ENCODE measurements at regions of chr15 and their contacts with region 1.

Region 1: DNA sequence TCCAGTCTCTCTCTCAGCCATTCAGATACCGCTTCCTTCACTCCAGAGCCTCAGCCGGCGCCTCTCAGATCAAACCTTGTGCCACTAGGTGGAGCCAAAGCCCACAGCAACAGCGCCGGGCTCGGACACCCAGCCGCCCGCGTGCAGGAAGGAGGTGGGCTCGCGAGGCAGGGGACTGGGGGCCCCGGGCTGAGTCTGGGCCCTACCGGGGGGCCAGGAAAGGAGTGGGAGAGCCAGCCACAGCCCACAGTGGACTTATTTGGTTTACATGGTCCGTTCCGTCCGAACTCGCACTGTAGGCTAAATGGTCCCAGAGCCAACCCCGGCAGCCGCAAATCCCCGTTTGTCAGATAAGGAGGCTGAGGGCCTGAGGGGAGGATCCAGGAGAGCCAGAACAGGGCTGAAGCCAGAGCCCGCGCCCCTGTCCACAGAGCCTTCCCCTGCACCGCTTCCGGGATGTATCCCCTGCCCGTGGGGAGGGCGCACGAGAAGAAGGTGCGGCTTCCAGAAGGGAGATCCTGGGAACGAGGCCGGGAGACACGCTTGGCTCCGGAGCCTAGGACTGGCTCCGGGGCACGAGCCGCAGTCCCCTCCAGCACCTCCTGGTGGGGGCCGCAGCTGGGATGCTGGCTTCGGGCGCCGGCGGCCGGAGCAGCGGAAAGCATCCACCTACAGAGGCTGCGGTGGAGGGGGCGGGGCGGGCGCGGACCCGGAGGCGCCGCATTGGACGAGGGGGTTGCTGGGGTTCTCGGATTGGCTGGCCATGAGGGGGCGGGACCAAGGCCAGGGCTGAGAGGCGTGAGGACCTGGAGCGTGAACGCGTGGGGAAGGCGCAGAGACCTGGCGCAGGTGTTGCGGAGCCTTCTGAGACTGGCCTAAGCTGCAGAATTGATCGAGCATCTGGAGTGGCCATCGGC is 6.5 kb upstream of the CYP11A1 start:
- DNase-seq: peak; percentile 97
- ATAC-seq: peak; percentile 84
- H3K4me3 Mint-ChIP-seq: peak overlapping the region; percentile 76
- H3K27ac Mint-ChIP-seq: no peak overlapping the region
- H3K4me1 Mint-ChIP-seq: peaks cover 31% of the 10 kb centered on the region
- H3K27me3 Mint-ChIP-seq: peaks cover 7% of the 10 kb centered on the region

Region 2: DNA sequence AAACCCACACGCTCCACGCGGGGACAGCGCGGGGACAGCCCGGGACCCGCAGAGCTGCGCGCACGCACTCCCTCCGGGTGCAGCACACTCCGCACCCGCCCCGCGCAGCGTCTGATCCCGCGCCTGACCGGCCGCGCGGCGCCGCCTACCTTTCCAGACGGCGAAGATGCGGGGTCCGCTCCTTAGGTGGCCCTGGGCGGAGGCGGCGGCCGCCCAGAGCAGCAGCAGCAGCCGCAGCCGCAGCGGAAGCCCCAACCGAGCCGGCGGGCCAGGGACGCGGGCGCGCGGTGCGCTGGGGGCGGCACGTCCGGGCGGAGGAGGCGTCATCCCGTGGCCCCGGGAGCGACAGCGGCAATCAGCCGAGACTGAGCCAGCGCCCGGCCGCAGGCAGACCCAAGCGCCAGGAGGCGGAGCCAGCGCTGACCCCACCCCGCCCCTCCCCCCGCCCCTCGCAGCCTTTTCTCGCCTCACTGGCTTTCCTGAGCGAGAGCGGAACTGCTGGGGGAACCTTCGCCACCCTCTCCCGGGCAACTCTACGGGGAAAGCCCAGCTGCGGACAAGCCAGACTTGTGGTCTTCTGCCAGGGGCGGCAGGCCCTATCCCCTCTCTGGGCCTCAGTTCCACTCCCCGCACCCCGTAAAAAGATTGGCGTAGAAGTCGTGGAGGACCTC is 59.7 kb after region 1 on chr15 and contains the start of gene SEMA7A:
- CTCF ChIA-PET with region 1: interaction called, 176 read pairs
- POLR2A ChIA-PET with region 1: interaction called, 4 read pairs
- intact Hi-C with region 1: loop called (anchors 1 to 2 kb)
- DNase-seq: peak; percentile 90
- ATAC-seq: peak; percentile 89
- H3K4me3 Mint-ChIP-seq: peak within 1 kb of the TSS; percentile 83
- H3K27ac Mint-ChIP-seq: peak within 1 kb of the TSS; percentile 56
- H3K4me1 Mint-ChIP-seq: peaks cover 59% of the 10 kb centered on the region
- H3K27me3 Mint-ChIP-seq: no peaks in the 10 kb centered on the region
- total RNA-seq, gene SEMA7A: 57.3 to 57.7 TPM

Region 3: DNA sequence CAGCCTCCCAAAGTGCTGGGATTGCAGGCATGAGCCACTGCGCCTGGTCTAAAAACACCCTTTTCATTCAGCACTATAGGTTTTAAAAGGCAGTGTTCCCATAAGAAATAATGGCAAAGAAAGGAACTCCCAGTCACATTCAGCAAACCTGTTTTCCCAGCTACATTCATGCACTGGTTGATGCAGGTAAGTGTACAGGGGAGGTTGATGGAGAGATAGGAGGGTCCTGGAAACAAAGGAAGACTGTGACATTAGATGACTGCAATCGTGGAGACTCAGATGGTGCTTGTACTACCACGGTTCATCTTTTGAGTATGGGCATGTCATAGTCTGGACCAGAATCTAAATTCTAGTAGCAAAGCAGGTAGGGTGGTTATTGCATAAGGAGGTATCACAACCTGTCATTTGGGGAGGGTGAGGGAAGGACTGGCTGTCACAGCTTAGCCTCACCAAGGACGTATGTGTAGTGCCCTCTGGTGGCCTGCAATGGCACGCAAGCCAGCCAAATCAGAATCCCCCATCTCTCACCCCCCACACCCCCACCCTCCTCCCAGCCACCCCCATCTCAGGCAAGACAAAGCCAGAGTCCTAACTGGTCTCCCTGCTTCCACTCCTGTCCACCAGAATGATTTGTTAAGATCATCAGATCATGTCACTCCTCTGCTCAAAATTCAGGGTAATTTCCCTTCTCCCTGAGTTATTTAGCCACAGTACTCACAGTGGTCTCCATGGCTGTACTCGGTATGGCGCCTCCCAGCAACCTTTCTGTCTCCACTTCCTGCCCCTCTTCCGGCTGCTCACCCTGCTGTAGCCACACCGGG is 115.7 kb after region 1 on chr15:
- CTCF ChIA-PET with region 1: interaction called, 12 read pairs
- POLR2A ChIA-PET with region 1: no interaction called
- intact Hi-C with region 1: loop called (anchors 1 kb)
- DNase-seq: peak; percentile 85
- ATAC-seq: peak; percentile 92
- H3K4me3 Mint-ChIP-seq: no peak overlapping the region
- H3K27ac Mint-ChIP-seq: no peak overlapping the region
- H3K4me1 Mint-ChIP-seq: peaks cover 12% of the 10 kb centered on the region
- H3K27me3 Mint-ChIP-seq: no peaks in the 10 kb centered on the region

Region 4: DNA sequence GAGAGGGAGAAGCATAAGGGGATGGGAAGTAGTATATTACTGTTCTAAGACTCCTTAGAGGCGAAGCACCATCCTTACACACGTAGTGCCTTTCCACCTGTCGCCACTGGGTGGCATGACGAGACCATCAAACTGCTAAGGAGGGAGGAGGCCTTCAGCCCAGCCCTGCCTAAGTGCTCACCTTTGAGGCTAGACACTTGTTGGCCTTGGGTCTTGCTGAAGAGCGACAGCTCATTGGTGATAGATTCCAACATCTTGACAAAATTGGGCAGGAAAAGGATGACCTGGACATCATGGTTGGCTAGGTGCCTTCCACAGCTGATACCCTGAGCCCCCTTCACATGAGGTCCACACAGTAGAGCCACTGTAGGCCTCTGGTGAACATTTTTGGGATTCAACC is 261.2 kb after region 1 on chr15:
- CTCF ChIA-PET with region 1: interaction called, 7 read pairs
- POLR2A ChIA-PET with region 1: no interaction called
- intact Hi-C with region 1: loop called (anchors 1 kb)
- DNase-seq: peak; percentile 87
- ATAC-seq: peak; percentile 90
- H3K4me3 Mint-ChIP-seq: no peak overlapping the region
- H3K27ac Mint-ChIP-seq: no peak overlapping the region
- H3K4me1 Mint-ChIP-seq: no peaks in the 10 kb centered on the region
- H3K27me3 Mint-ChIP-seq: no peaks in the 10 kb centered on the region

Region 5: GRCh38 chr15:74950078-74951000 is 576.4 kb after region 1 on chr15:
- CTCF ChIA-PET with region 1: no interaction called
- POLR2A ChIA-PET with region 1: no interaction called
- intact Hi-C with region 1: loop called in 1 of 2 experiments (anchors 5 kb)
- DNase-seq: peak; percentile 87
- ATAC-seq: peak; percentile 87
- H3K4me3 Mint-ChIP-seq: no peak overlapping the region
- H3K27ac Mint-ChIP-seq: no peak overlapping the region
- H3K4me1 Mint-ChIP-seq: peaks cover 7% of the 10 kb centered on the region
- H3K27me3 Mint-ChIP-seq: no peaks in the 10 kb centered on the region

Measured in activated CD4-positive, alpha-beta T cell treated with anti-CD3 and anti-CD28 coated beads for 36 hours (primary cell).